ENCODE measurements at regions of chr7 and their contacts with region 1.

Region 1: DNA sequence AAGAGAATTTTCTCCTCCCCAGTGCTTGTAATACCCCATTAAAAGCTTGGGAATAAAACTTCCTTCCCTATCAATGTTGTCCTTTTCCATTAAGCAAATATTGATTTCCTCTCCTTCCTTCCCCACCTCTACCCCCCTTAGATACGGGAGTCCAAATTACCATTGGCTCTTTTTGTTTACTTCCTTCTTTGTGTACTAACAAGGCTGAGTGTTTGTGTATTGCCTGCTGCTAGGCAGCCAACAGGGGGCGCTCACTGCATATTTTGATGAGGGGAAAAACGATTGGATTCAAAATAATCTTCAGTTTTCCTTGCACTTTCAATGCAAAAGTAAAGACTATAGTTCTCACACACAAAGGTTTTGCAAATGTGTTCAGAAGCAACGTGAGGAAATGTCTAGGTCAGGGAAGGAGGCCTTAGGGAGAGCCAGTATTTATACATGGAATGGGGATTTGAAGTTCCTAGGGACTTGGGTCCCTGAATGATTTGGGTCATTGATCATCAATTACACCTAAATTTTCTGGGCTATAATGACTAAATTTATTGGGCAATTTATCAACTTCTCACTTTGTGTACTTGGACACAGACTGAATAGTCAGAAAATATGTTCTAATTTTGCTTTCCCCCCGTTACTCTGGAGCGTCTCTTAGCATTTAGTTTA is 23.6 kb upstream of the VPS41 start:
- DNase-seq: peak; percentile 68
- H3K4me3 ChIP-seq: no peak overlapping the region
- H3K27ac ChIP-seq: no peak overlapping the region
- H3K4me1 ChIP-seq: no peaks in the 10 kb centered on the region
- H3K27me3 ChIP-seq: no peaks in the 10 kb centered on the region
- CTCF ChIP-seq: peak; percentile 68 to 86 (median 78)
- EP300 ChIP-seq: no peak
- POLR2A ChIP-seq: no peak

Region 2: DNA sequence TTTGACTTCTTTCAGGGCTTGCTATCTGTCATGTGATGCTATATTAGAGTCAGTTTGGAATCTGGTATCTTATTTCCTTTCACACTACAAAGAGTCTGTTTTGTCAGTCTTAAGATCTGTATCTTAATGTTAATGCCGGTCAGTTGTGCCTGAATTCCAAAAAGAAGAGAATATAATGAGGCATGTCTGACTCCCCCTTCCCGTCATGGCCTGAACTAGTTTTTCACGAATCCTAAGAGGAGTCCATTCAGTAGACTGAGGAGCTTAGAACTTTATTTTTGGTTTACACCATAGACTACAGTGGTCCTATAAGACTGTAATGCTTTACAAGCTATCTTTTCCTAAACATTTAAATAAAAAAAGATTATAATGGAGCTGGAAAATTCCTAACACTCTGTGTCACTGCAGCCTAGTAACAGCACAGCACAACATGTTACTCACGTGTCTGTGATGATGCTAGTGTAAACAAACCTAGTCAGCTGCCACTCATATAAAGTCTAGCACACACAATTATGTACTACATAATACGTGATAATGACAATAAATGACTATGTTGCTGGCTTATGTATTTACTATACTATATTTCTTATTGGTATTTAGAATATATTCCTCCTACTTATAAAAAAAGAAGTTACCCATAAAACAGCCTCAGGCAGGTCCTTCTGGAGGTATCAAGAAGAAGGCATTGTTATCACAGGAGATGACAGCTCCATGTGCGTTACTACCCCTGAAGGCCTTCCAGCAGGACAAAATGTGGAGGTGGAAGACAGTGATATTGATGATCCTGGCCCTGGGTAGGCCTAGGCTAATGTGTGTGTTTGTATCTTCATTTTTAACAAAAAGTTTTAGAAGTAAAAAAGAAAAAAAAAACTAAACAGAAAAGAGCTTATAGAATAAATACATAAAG is 74.1 kb before region 1 on chr7:
- in situ Hi-C with region 1: no loop called
- intact Hi-C with region 1: no loop called
- DNase-seq: no peak
- H3K4me3 ChIP-seq: no peak overlapping the region
- H3K27ac ChIP-seq: peak overlapping the region in 1 of 4 donors; percentile 22
- H3K4me1 ChIP-seq: peaks cover 0 to 7% (median 1%) of the 10 kb centered on the region in 4 donors
- H3K27me3 ChIP-seq: no peaks in the 10 kb centered on the region
- CTCF ChIP-seq: no peak
- EP300 ChIP-seq: no peak
- POLR2A ChIP-seq: no peak

Region 3: DNA sequence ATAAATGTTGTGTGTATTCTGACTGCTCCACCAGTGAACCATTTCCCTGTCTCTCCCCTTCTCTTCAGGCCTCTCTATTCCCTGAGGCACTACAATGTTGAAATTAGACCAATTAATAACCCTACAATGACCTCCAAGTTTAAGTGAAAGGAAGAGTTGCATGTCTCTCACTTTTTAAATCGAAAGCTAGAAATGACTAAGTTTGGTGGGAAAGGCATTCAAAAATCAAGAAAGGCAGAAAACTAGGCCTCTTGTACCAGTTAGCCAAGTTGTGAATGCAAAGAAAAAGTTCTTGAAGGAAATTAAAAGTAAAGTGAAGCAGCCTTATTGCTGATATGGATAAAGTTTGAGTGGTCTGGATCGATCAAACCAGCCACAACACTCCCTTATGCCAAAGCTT is 435.3 kb after region 1 on chr7:
- in situ Hi-C with region 1: no loop called
- intact Hi-C with region 1: no loop called
- DNase-seq: no peak
- H3K4me3 ChIP-seq: no peak overlapping the region
- H3K27ac ChIP-seq: no peak overlapping the region
- H3K4me1 ChIP-seq: no peaks in the 10 kb centered on the region
- H3K27me3 ChIP-seq: no peaks in the 10 kb centered on the region
- CTCF ChIP-seq: no peak
- EP300 ChIP-seq: no peak
- POLR2A ChIP-seq: no peak

Region 4: GRCh38 chr7:39465055-39465929 is 532.7 kb after region 1 on chr7:
- in situ Hi-C with region 1: loop called (anchors 10 to 25 kb)
- intact Hi-C with region 1: loop called (anchors 10 kb)
- DNase-seq: peak; percentile 50
- H3K4me3 ChIP-seq: peak overlapping the region in 1 of 4 donors; percentile 10
- H3K27ac ChIP-seq: no peak overlapping the region
- H3K4me1 ChIP-seq: peaks cover 0 to 20% (median 8%) of the 10 kb centered on the region in 4 donors
- H3K27me3 ChIP-seq: peaks cover 25% of the 10 kb centered on the region
- CTCF ChIP-seq: peak; percentile 71 to 78 (median 74)
- EP300 ChIP-seq: no peak
- POLR2A ChIP-seq: no peak

Region 5: GRCh38 chr7:39527296-39527695 is 594.7 kb after region 1 on chr7:
- in situ Hi-C with region 1: no loop called
- intact Hi-C with region 1: loop called (anchors 10 kb)
- DNase-seq: no peak
- H3K4me3 ChIP-seq: no peak overlapping the region
- H3K27ac ChIP-seq: no peak overlapping the region
- H3K4me1 ChIP-seq: peaks cover 0 to 25% (median 3%) of the 10 kb centered on the region in 4 donors
- H3K27me3 ChIP-seq: no peaks in the 10 kb centered on the region
- CTCF ChIP-seq: no peak
- EP300 ChIP-seq: no peak
- POLR2A ChIP-seq: no peak

Region 6: GRCh38 chr7:39560408-39560807 is 627.8 kb after region 1 on chr7:
- in situ Hi-C with region 1: no loop called
- intact Hi-C with region 1: no loop called
- DNase-seq: no peak
- H3K4me3 ChIP-seq: no peak overlapping the region
- H3K27ac ChIP-seq: no peak overlapping the region
- H3K4me1 ChIP-seq: peaks cover 0 to 5% (median 1%) of the 10 kb centered on the region in 4 donors
- H3K27me3 ChIP-seq: no peaks in the 10 kb centered on the region
- CTCF ChIP-seq: no peak
- EP300 ChIP-seq: no peak
- POLR2A ChIP-seq: no peak

Measured in transverse colon (tissue), 4 donors.